GM13976 (cell line): ENCODE measurements at regions of chr18 and their contacts with region 1.

Region 1: GRCh38 chr18:13375302-13376255 is 157.0 kb downstream of the LDLRAD4 start:
- DNase-seq: peak; percentile 88
- CTCF ChIP-seq: no peak

Region 2: GRCh38 chr18:13048061-13048595 is 327.5 kb before region 1 on chr18:
- in situ Hi-C with region 1: no loop called
- DNase-seq: no peak
- CTCF ChIP-seq: no peak

Region 3: DNA sequence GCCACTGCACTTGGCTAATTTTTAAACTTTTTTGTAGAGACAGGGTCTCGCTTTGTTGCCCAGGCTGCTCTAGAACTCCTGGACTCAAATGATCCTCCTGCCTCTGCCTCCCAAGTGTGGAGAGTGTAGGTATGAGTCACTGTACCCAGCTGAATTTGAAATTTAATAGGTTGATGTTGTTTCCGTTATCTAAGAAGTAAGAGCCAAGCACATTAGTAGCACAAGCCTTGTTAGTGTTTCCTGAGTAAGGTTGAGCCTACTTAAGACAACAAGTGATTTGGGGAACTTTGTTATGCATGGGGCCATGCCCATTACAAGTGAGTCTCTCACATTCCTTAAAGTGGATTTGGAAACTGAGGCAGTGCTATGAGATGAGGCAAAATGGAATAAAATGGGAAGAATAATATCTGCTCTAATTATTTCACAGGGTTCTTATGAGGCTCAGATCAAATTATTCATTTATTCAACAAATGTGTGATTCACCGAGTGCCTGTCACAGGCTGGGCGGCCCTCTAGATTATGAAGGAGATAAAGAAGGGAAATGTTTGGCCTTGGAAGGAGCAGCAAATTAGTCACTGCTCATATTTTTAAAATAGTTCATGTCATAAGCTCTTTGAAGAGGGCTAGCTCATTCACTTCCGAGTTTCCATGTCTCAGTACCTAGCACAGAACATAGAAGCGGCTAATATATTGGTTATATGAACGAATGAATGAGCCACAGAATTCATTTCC is 60.2 kb after region 1 on chr18:
- in situ Hi-C with region 1: loop called (anchors 10 kb)
- DNase-seq: no peak
- CTCF ChIP-seq: no peak

Region 4: DNA sequence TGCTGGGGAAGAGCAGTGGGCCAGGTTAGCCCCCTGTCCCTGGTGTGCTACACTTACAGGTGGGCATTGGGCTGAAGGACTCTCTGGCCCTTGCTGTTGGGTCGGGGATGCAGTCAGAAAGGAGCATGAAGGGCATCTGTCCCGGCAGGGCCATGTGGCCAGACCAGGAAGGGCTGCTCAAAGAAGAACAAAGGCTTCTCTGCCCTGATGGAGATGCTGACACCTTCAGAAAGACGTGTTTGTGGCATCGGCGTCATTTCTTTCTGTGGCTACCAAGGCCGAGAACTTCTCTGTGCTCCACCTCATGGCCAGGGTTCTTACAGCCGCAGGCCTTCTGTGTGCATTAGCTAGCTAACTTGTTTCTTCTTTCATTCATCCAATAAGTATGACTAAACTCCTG is 111.7 kb after region 1 on chr18:
- in situ Hi-C with region 1: no loop called
- DNase-seq: no peak
- CTCF ChIP-seq: no peak